ENCODE measurements at regions of chr13 and their contacts with region 1.

Region 1: GRCh38 chr13:89878904-89879303 is 1468.6 kb upstream of the MIR17HG start:
- DNase-seq: no peak
- H3K4me3 ChIP-seq: no peak overlapping the region
- H3K27ac ChIP-seq: no peak overlapping the region
- H3K4me1 ChIP-seq: no peaks in the 10 kb centered on the region
- CTCF ChIP-seq: no peak

Region 2: GRCh38 chr13:89846926-89847585 is 31.8 kb before region 1 on chr13:
- CTCF ChIA-PET with region 1: no interaction called
- POLR2A ChIA-PET with region 1: no interaction called
- intact Hi-C with region 1: no loop called
- DNase-seq: no peak
- H3K4me3 ChIP-seq: no peak overlapping the region
- H3K27ac ChIP-seq: no peak overlapping the region
- H3K4me1 ChIP-seq: no peaks in the 10 kb centered on the region
- CTCF ChIP-seq: no peak

Region 3: DNA sequence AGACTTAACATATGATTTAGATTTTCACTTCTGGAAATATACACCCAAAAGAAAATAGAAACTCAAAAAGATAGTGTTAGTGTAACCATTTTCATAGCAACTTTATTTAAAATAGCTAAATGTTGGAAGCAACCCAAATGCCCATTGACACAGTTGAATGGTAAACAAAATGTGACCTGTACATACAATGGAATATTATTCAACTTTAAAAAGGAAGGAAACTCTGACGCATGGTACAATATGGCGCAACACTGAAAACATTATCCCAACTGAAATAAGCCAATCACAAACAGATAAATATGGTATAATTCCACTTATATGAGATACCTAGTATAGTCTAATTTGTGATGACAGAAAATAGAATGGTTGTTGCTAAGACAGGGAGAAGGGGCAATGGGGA is 12.5 kb after region 1 on chr13:
- CTCF ChIA-PET with region 1: no interaction called
- POLR2A ChIA-PET with region 1: interaction called, 17 read pairs
- intact Hi-C with region 1: no loop called
- DNase-seq: no peak
- H3K4me3 ChIP-seq: no peak overlapping the region
- H3K27ac ChIP-seq: no peak overlapping the region
- H3K4me1 ChIP-seq: no peaks in the 10 kb centered on the region
- CTCF ChIP-seq: no peak

Measured in OCI-LY7 (cell line).